ENCODE measurements at regions of chr3 and their contacts with region 1.

Region 1: DNA sequence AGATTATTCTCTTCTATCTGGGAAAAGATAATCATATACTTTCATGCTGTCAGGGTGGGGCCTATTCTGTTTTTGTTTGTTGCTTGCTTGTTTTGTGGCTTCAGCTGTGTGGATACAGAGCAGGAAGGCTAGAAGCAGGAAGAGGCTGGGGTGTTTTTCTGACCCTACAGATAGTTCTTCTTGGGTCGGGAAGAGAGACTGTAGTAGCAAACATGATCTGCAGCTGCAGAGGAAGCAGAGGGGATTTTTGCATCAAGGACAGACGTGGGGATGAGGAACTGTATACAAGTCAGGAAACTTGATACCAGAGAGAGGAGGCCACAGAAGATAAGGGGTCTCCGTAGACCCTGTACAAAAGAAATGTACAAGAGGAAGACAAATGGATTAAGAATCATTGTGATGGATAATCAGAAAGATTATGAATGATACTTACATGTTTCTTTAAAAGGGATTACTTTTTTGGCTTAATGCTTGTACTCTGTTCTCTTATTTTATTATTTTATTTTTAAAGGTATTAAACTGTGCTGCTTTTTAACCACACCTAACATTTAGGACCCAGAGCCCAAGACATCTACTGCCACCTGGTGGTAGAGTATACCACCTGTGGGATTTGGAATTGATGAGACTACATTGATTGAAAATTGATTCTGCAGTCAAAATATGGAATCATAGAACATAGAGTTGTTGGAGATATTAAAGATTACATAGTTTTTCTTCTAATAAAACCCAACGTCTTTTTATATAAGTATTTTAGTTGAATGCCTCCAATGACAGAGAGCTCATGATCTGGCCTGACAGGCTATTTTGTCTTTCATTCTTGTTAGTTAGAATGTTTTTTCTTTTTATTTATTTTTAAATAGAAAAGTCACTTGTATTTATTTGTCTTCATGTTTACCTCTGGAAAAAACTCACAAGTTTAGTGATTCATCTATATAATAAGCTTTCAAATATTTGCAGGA is 87.3 kb upstream of the ROPN1 start:
- DNase-seq: no peak
- H3K4me3 ChIP-seq: no peak overlapping the region
- H3K27ac ChIP-seq: peak overlapping the region; percentile 42 to 57
- H3K4me1 ChIP-seq: peaks cover 12 to 51% of the 10 kb centered on the region in 2 donors
- H3K27me3 ChIP-seq: no peaks in the 10 kb centered on the region
- CTCF ChIP-seq: peak; percentile 49 to 69 (median 68)

Region 2: DNA sequence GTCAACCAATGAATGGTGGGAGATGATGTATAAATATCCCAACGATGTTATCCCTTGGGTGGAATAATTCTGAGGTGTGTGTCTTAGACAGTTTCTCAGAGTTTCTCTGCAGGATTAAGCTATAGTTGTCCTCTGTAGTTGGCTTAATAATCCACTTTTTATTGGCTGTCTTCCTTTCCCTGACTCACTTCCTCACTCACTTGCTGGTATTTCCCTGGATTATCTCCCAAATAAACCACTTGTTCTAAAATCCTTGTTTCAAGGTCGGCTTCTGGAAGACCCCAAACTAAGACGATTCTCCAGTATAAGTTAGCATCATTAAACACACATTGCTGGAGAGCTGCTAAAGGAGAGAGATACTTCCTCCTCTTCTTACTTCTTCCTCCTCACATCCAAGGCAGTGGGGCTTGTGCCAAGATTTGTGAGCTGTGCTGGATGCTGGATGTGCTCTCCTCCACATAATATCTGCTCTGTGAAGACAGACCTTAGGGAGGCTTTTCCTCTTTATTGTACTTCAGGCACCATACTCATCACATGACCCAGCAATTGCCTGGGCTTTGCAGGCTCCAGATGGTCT is 64.8 kb before region 1 on chr3:
- intact Hi-C with region 1: loop called (anchors 1 kb)
- DNase-seq: peak in 1 of 2 donors; percentile 74
- H3K4me3 ChIP-seq: no peak overlapping the region
- H3K27ac ChIP-seq: peak overlapping the region; percentile 83 to 86
- H3K4me1 ChIP-seq: peaks cover 0 to 37% of the 10 kb centered on the region in 2 donors
- H3K27me3 ChIP-seq: no peaks in the 10 kb centered on the region
- CTCF ChIP-seq: no peak

Region 3: GRCh38 chr3:124032648-124033359 is 46.4 kb before region 1 on chr3:
- intact Hi-C with region 1: loop called (anchors 2 kb)
- DNase-seq: peak in 1 of 2 donors; percentile 91
- H3K4me3 ChIP-seq: peak overlapping the region; percentile 85 to 96
- H3K27ac ChIP-seq: peak overlapping the region; percentile 81 to 90
- H3K4me1 ChIP-seq: peaks cover 0 to 9% of the 10 kb centered on the region in 2 donors
- H3K27me3 ChIP-seq: no peaks in the 10 kb centered on the region
- CTCF ChIP-seq: peak; percentile 63 to 92 (median 90)